ENCODE measurements at regions of chr1 and their contacts with region 1.

Region 1: DNA sequence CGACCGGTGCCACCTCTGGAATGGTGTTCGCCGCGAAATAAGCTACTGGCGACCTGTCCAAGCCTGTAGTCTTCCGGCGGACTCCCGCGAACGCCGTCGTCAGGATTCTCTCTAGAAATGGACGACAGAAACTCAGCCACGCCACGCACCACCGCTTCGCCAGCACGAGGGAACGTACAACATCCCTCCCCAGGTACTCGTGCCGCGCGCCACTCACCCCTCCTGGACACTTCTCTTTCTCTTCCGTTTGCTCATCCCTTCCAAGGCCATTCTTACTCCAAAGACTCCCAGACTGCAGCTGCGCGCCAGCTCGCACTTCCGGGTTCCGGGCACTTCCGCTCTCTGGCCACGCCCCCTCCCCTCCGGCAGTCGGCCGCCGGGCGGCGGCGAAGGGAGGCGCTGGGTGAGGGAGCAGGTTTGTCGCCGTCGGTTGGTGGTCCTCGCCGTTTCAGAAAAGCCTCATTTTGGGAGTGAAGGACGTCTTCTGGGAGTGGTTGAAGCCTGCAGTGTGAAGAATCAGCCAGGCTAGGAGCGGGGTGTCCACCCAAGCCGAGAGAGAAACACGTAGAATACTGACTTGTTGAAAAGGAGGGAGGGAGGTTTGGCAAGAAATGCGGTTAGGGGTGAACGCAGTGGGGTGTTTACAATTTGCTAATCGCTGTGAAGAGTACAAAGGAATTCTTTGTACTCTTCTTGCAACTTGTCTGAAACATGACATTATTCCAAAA is at the start of gene RBM34:
- DNase-seq: peak; percentile 86 to 96 (median 90)
- ATAC-seq: peak; percentile 84
- H3K4me3 ChIP-seq: peak within 1 kb of the TSS; percentile 75
- H3K4me3 Mint-ChIP-seq: peak within 1 kb of the TSS; percentile 95
- H3K27ac ChIP-seq: peak within 1 kb of the TSS; percentile 82 to 88
- H3K27ac Mint-ChIP-seq: peak within 1 kb of the TSS; percentile 97
- H3K4me1 ChIP-seq: peaks cover 43% of the 10 kb centered on the region
- H3K4me1 Mint-ChIP-seq: peaks cover 26% of the 10 kb centered on the region
- H3K27me3 ChIP-seq: no peaks in the 10 kb centered on the region
- H3K27me3 Mint-ChIP-seq: no peaks in the 10 kb centered on the region
- CTCF ChIP-seq: no peak
- total RNA-seq, gene RBM34: 195 to 218 TPM

Region 2: DNA sequence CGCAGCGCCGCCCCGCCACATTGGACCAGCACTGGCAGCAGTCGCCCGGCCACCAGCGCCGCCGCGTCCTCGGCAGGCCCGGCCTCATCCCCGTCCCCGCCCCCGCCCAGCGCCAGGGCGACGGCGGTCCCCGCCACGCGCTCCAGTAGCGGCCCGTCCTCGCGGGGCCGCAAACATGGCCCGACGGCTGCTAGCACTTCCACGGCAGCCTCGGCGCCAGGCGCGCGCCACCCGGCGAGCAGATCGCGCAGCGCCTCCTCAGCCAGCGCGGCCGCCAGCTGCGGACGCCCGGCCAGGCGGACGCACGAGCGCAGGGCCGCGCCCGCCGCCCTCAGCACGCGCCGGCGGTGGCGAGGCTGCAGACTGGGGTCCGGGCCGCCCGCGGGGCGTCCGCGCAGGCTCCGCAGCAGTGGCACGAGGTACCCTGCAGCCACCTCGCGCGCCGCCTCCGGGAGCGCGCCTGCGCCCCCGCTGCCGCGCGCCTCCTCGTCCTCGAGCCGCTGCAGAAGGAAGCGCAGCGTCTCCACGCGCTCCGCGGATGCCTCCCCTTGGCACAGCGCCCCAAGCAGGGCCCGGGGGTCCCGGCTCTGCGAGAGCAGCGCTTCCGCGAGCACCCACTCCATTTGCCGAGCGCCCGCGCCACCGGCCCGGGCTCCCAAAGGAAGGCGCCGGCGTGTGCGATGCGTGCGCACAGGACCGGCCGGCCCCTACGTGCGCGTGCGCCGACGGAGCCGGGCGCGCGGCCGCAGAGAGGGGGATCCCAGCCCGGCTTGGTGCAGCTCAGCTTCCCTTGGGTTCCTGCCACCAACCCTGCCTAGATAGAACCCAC is 682.4 kb before region 1 on chr1 and contains the start of gene TARBP1:
- CTCF ChIA-PET with region 1: no interaction called
- POLR2A ChIA-PET with region 1: interaction called, 14 read pairs
- intact Hi-C with region 1: no loop called
- DNase-seq: peak; percentile 46 to 92 (median 68)
- ATAC-seq: peak; percentile 69
- H3K4me3 ChIP-seq: peak within 1 kb of the TSS; percentile 64
- H3K4me3 Mint-ChIP-seq: peak within 1 kb of the TSS; percentile 90
- H3K27ac ChIP-seq: peak within 1 kb of the TSS in 1 of 2 donors; percentile 50
- H3K27ac Mint-ChIP-seq: peak within 1 kb of the TSS; percentile 92
- H3K4me1 ChIP-seq: peaks cover 19% of the 10 kb centered on the region
- H3K4me1 Mint-ChIP-seq: peaks cover 44% of the 10 kb centered on the region
- H3K27me3 ChIP-seq: no peaks in the 10 kb centered on the region
- H3K27me3 Mint-ChIP-seq: no peaks in the 10 kb centered on the region
- CTCF ChIP-seq: no peak
- total RNA-seq, gene TARBP1: 38.4 to 40.9 TPM

Region 3: DNA sequence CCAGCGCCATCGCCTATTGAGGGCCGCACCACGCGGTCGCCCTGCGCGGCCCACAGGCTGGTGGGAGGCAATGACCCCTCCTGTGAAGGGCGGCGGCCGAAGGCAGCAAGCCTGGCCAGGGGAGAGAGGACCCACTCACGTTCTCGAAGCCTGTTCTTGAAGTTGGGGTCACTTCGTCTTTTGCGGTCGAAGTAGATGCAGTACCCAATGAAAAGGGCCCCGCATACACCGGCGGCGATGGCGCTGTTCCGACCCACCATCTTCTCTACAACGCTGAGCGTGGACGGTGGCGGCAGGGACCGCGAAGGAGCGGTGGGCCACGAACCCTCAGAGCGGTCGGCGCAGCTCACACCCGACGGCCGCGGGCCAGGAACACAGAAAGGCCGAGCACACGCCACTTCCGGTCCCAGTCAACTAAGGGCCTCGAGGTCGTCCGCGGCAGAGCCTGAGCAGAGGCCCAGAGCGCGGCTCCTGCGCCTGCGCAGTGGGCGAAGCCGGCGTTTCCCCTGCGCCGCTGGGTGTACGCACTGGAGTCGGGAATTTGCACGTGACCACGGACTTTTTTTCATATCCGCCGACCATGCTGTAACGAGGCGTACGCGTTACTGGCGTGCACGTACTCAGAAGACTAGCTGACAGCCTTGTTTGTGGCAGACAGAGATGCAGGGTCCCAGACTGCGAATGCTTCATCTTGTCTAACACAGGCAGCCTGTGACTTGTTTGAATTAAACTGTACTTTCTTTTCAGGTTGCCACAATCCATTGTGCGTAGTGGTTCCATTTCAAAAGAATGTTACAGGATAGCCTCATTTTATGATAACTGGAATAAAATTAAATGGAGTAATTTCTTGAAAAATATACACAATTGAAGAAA is 32.4 kb before region 1 on chr1 and contains the start of gene TOMM20:
- CTCF ChIA-PET with region 1: interaction called, 3 read pairs
- POLR2A ChIA-PET with region 1: interaction called, 67 read pairs
- intact Hi-C with region 1: loop called (anchors 1 to 2 kb)
- DNase-seq: peak; percentile 86 to 99 (median 92)
- ATAC-seq: peak; percentile 91
- H3K4me3 ChIP-seq: peak within 1 kb of the TSS; percentile 86
- H3K4me3 Mint-ChIP-seq: peak within 1 kb of the TSS; percentile 98
- H3K27ac ChIP-seq: peak within 1 kb of the TSS; percentile 89 to 93
- H3K27ac Mint-ChIP-seq: peak within 1 kb of the TSS; percentile 98
- H3K4me1 ChIP-seq: peaks cover 38% of the 10 kb centered on the region
- H3K4me1 Mint-ChIP-seq: peaks cover 45% of the 10 kb centered on the region
- H3K27me3 ChIP-seq: no peaks in the 10 kb centered on the region
- H3K27me3 Mint-ChIP-seq: no peaks in the 10 kb centered on the region
- CTCF ChIP-seq: no peak
- total RNA-seq, gene TOMM20: 129 to 133 TPM

Region 4: DNA sequence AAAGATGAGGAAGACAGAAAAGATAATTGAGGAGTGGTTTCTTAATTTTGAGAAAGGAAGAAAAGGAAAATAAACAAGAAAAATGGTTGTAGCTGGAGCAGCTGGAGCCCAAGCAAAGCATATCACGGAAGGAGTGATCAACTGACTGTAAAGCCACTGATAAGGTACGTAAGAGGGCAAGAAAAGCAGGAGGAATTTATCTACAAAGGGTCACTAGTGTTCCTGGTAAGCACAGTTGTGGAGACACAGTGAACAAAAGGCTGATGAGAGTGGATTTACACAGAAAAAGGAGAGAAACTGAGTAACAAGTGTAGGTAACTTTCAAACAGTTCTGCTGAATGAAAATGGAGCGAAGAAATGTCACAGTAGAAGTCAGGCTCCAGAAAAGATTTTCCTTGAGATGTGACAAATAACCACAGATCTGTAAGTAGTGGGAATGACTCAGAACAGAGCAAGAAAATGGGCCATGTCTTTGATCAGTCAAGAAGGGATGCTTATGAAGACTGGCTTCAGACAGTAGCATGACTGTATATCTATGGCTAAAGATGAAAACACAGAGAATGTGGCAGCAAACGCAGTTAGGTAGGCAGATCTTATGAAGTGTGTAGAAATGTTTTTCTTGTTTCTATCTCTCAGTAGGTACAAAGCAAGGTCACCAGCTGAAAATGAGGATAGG is 45.5 kb after region 1 on chr1:
- CTCF ChIA-PET with region 1: no interaction called
- POLR2A ChIA-PET with region 1: interaction called, 10 read pairs
- intact Hi-C with region 1: loop called in 1 of 2 experiments (anchors 2 kb)
- DNase-seq: peak in 4 of 14 experiments; percentile 14 to 56 (median 40)
- ATAC-seq: peak; percentile 84
- H3K4me3 ChIP-seq: no peak overlapping the region
- H3K4me3 Mint-ChIP-seq: peak overlapping the region; percentile 30
- H3K27ac ChIP-seq: peak overlapping the region; percentile 11 to 21
- H3K27ac Mint-ChIP-seq: peak overlapping the region; percentile 67
- H3K4me1 ChIP-seq: peaks cover 14% of the 10 kb centered on the region
- H3K4me1 Mint-ChIP-seq: peaks cover 34% of the 10 kb centered on the region
- H3K27me3 ChIP-seq: no peaks in the 10 kb centered on the region
- H3K27me3 Mint-ChIP-seq: no peaks in the 10 kb centered on the region
- CTCF ChIP-seq: no peak

Region 5: GRCh38 chr1:235313931-235314678 is 153.0 kb after region 1 on chr1:
- CTCF ChIA-PET with region 1: no interaction called
- POLR2A ChIA-PET with region 1: no interaction called
- intact Hi-C with region 1: no loop called
- DNase-seq: no peak
- ATAC-seq: no peak
- H3K4me3 ChIP-seq: no peak overlapping the region
- H3K4me3 Mint-ChIP-seq: peak overlapping the region; percentile 76
- H3K27ac ChIP-seq: no peak overlapping the region
- H3K27ac Mint-ChIP-seq: peak overlapping the region; percentile 82
- H3K4me1 ChIP-seq: peaks cover 48% of the 10 kb centered on the region
- H3K4me1 Mint-ChIP-seq: peaks cover 72% of the 10 kb centered on the region
- H3K27me3 ChIP-seq: no peaks in the 10 kb centered on the region
- H3K27me3 Mint-ChIP-seq: no peaks in the 10 kb centered on the region
- CTCF ChIP-seq: no peak

Region 6: GRCh38 chr1:235328357-235329138 is 167.4 kb after region 1 on chr1 and contains the start of gene GGPS1:
- CTCF ChIA-PET with region 1: no interaction called
- POLR2A ChIA-PET with region 1: interaction called, 11 read pairs
- intact Hi-C with region 1: loop called (anchors 2 to 5 kb)
- DNase-seq: peak; percentile 96 to 100 (median 99)
- ATAC-seq: peak; percentile 78
- H3K4me3 ChIP-seq: peak within 1 kb of the TSS; percentile 97
- H3K4me3 Mint-ChIP-seq: no peak within 1 kb of the TSS
- H3K27ac ChIP-seq: peak within 1 kb of the TSS; percentile 96 to 98
- H3K27ac Mint-ChIP-seq: no peak within 1 kb of the TSS
- H3K4me1 ChIP-seq: peaks cover 16% of the 10 kb centered on the region
- H3K4me1 Mint-ChIP-seq: peaks cover 23% of the 10 kb centered on the region
- H3K27me3 ChIP-seq: no peaks in the 10 kb centered on the region
- H3K27me3 Mint-ChIP-seq: no peaks in the 10 kb centered on the region
- CTCF ChIP-seq: peak; percentile 34
- total RNA-seq, gene GGPS1: 20.6 to 20.9 TPM